ENCODE measurements at regions of chr12 and their contacts with region 1.

Region 1: GRCh38 chr12:46209914-46210872 is 58.6 kb downstream of the SLC38A1 start:
- DNase-seq: peak; percentile 68
- ATAC-seq: peak; percentile 84
- H3K4me3 ChIP-seq: no peak overlapping the region
- H3K27ac ChIP-seq: peak overlapping the region; percentile 85
- H3K4me1 ChIP-seq: peaks cover 59% of the 10 kb centered on the region
- H3K27me3 ChIP-seq: no peaks in the 10 kb centered on the region
- CTCF ChIP-seq: no peak
- EP300 ChIP-seq: peak; percentile 83 to 86
- POLR2A ChIP-seq: peak; percentile 52; the same call in 1 of the 2 replicates
- RAD21 ChIP-seq: no peak

Region 2: GRCh38 chr12:46160101-46160980 is 49.9 kb before region 1 on chr12:
- CTCF ChIA-PET with region 1: interaction called, 6 read pairs
- POLR2A ChIA-PET with region 1: no interaction called
- RAD21 ChIA-PET with region 1: interaction called, 4 read pairs
- SMC1A ChIA-PET with region 1: interaction called, 30 read pairs
- in situ Hi-C with region 1: no loop called
- intact Hi-C with region 1: no loop called
- DNase-seq: no peak
- ATAC-seq: no peak; the same call in 2 of the 3 replicates
- H3K4me3 ChIP-seq: no peak overlapping the region
- H3K27ac ChIP-seq: no peak overlapping the region
- H3K4me1 ChIP-seq: no peaks in the 10 kb centered on the region
- H3K27me3 ChIP-seq: no peaks in the 10 kb centered on the region
- CTCF ChIP-seq: no peak
- EP300 ChIP-seq: no peak
- POLR2A ChIP-seq: no peak
- RAD21 ChIP-seq: no peak

Region 3: DNA sequence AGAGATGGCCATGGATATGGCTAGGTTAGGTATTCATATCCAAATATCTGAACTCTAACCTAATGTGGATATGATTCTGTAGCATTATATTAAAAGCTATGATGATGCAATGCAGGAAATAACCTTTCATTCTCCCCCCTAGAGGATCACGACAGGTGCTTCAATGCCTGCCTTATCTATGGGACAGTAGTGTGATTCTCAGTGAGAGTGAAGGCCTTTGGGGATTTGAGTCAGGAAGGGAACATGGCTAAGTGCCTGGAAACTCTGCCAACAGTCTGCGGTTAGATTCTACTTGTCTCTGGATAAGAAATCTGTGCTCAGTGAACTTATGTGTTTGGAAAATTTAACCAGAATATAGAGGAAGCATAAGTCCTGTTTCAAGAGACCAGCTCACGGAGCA is 23.2 kb before region 1 on chr12:
- CTCF ChIA-PET with region 1: interaction called, 33 read pairs
- POLR2A ChIA-PET with region 1: interaction called, 95 read pairs
- RAD21 ChIA-PET with region 1: interaction called, 126 read pairs
- SMC1A ChIA-PET with region 1: interaction called, 377 read pairs
- in situ Hi-C with region 1: no loop called
- intact Hi-C with region 1: no loop called
- DNase-seq: no peak
- ATAC-seq: peak; percentile 50
- H3K4me3 ChIP-seq: no peak overlapping the region
- H3K27ac ChIP-seq: no peak overlapping the region; the same call in 1 of the 2 replicates
- H3K4me1 ChIP-seq: peaks cover 8% of the 10 kb centered on the region; the same call in 1 of the 2 replicates
- H3K27me3 ChIP-seq: no peaks in the 10 kb centered on the region
- CTCF ChIP-seq: no peak
- EP300 ChIP-seq: no peak
- POLR2A ChIP-seq: 0 out of 2 replicates have a peak, but pooled peaks have one; percentile 38
- RAD21 ChIP-seq: no peak

Region 4: DNA sequence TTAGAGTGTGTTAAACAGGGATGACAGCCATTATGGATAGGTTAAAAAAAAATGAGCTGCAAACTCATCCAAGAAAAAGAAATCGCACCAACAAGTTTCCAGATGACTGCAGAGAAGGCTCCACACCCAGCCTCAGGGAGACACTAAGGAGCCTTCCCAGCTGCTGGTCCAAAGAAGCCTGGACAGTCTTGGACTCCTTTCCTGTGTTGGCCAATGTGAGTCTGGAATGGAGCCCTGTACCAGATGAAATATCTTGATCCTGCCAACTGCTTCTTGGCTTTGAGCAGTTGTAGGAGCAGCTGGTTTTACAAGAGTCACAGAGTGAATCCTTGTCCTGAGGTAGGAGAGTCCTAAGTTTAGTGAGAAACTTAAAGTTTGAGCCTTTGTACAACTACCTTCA is 14.2 kb after region 1 on chr12:
- CTCF ChIA-PET with region 1: interaction called, 4 read pairs
- POLR2A ChIA-PET with region 1: interaction called, 63 read pairs
- RAD21 ChIA-PET with region 1: interaction called, 72 read pairs
- SMC1A ChIA-PET with region 1: interaction called, 117 read pairs
- in situ Hi-C with region 1: no loop called
- intact Hi-C with region 1: no loop called
- DNase-seq: no peak
- ATAC-seq: no peak
- H3K4me3 ChIP-seq: no peak overlapping the region
- H3K27ac ChIP-seq: no peak overlapping the region
- H3K4me1 ChIP-seq: peaks cover 22% of the 10 kb centered on the region
- H3K27me3 ChIP-seq: no peaks in the 10 kb centered on the region
- CTCF ChIP-seq: no peak
- EP300 ChIP-seq: no peak
- POLR2A ChIP-seq: no peak
- RAD21 ChIP-seq: no peak

Region 5: GRCh38 chr12:46303039-46303666 is 93.0 kb after region 1 on chr12:
- CTCF ChIA-PET with region 1: interaction called, 6 read pairs
- POLR2A ChIA-PET with region 1: no interaction called
- RAD21 ChIA-PET with region 1: interaction called, 5 read pairs
- SMC1A ChIA-PET with region 1: interaction called, 11 read pairs
- in situ Hi-C with region 1: no loop called
- intact Hi-C with region 1: no loop called
- DNase-seq: peak; percentile 2
- ATAC-seq: peak; percentile 91
- H3K4me3 ChIP-seq: no peak overlapping the region
- H3K27ac ChIP-seq: no peak overlapping the region
- H3K4me1 ChIP-seq: no peaks in the 10 kb centered on the region
- H3K27me3 ChIP-seq: no peaks in the 10 kb centered on the region; a peak in 1 of 4 replicates
- CTCF ChIP-seq: peak; percentile 54 to 58 (median 57)
- EP300 ChIP-seq: no peak
- POLR2A ChIP-seq: no peak
- RAD21 ChIP-seq: peak; percentile 66